ENCODE measurements at regions of chr9 and their contacts with region 1.

Region 1: GRCh38 chr9:130940693-130941576 is 1.9 kb upstream of the FIBCD1 start:
- DNase-seq: peak; percentile 77 to 96 (median 89)
- ATAC-seq: peak; percentile 95 to 98 (median 96)
- H3K4me3 ChIP-seq: no peak overlapping the region
- H3K27ac ChIP-seq: no peak overlapping the region
- H3K4me1 ChIP-seq: peaks cover 3 to 7% (median 4%) of the 10 kb centered on the region in 3 donors
- H3K27me3 ChIP-seq: peaks cover 0 to 28% (median 14%) of the 10 kb centered on the region in 4 donors
- CTCF ChIP-seq: peak; percentile 79 to 88 (median 81)

Region 2: DNA sequence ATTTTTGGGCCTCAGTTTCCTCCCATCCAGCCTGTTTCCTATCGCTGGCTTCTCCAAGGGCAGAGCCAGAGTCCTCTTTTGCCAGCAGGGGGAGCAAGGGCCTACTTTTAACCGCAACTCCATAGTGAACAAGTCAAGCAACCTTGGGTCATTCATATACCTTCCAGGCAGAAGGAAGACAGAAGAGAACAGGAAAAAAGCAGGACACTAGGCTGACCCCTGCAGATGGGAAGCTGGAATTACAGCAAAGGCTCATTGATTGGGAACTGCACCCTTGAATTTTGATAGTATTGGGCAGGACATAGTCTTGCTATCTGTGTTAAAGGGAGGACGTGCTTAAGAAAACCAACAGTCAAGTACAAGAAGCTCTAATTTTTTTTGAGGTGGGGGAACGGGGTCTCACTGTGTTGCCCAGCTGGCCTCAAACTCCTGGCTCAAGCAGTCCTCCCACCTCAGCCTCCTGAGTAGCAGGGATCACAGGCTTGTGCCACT is 74.4 kb before region 1 on chr9:
- intact Hi-C with region 1: loop called in 1 of 3 experiments (anchors 5 kb)
- DNase-seq: peak; percentile 73 to 88 (median 76)
- ATAC-seq: peak; percentile 91 to 97 (median 92)
- H3K4me3 ChIP-seq: no peak overlapping the region
- H3K27ac ChIP-seq: no peak overlapping the region
- H3K4me1 ChIP-seq: peaks cover 0 to 4% (median 0%) of the 10 kb centered on the region in 3 donors
- H3K27me3 ChIP-seq: no peaks in the 10 kb centered on the region
- CTCF ChIP-seq: peak; percentile 71 to 88 (median 84)

Region 3: GRCh38 chr9:130893341-130894101 is 47.4 kb before region 1 on chr9:
- intact Hi-C with region 1: no loop called
- DNase-seq: peak in 2 of 6 donors; percentile 38 to 57
- ATAC-seq: peak in 3 of 4 donors; percentile 21 to 66 (median 57)
- H3K4me3 ChIP-seq: no peak overlapping the region
- H3K27ac ChIP-seq: no peak overlapping the region
- H3K4me1 ChIP-seq: no peaks in the 10 kb centered on the region
- H3K27me3 ChIP-seq: no peaks in the 10 kb centered on the region
- CTCF ChIP-seq: no peak